ENCODE measurements at regions of chr17 and their contacts with region 1.

Region 1: GRCh38 chr17:75131280-75132017 is at the start of gene NT5C:
- DNase-seq: peak; percentile 83
- ATAC-seq: peak; percentile 83
- H3K4me3 Mint-ChIP-seq: peak within 1 kb of the TSS; percentile 88
- H3K27ac Mint-ChIP-seq: peak within 1 kb of the TSS; percentile 92
- H3K4me1 Mint-ChIP-seq: peaks cover 28% of the 10 kb centered on the region
- H3K27me3 Mint-ChIP-seq: no peaks in the 10 kb centered on the region
- CTCF ChIP-seq: no peak
- total RNA-seq, gene NT5C: 95.0 and 98.2 TPM in 2 replicates

Region 2: GRCh38 chr17:75012346-75013091 is 118.9 kb before region 1 on chr17 and contains the start of gene MRPL58:
- CTCF ChIA-PET with region 1: interaction called, 3 read pairs
- POLR2A ChIA-PET with region 1: interaction called, 12 read pairs
- intact Hi-C with region 1: loop called (anchors 1 kb)
- DNase-seq: peak; percentile 78
- ATAC-seq: peak; percentile 95
- H3K4me3 Mint-ChIP-seq: peak within 1 kb of the TSS; percentile 97
- H3K27ac Mint-ChIP-seq: peak within 1 kb of the TSS; percentile 89
- H3K4me1 Mint-ChIP-seq: peaks cover 29% of the 10 kb centered on the region
- H3K27me3 Mint-ChIP-seq: no peaks in the 10 kb centered on the region
- CTCF ChIP-seq: no peak
- total RNA-seq, gene MRPL58: 28.4 and 31.8 TPM in 2 replicates

Region 3: GRCh38 chr17:75046582-75047289 is 84.7 kb before region 1 on chr17 and contains the starts of genes ATP5PD and KCTD2:
- CTCF ChIA-PET with region 1: interaction called, 3 read pairs
- POLR2A ChIA-PET with region 1: no interaction called
- intact Hi-C with region 1: loop called (anchors 1 kb)
- DNase-seq: peak; percentile 91
- ATAC-seq: peak; percentile 95
- H3K4me3 Mint-ChIP-seq: peak within 1 kb of the TSS; percentile 97
- H3K27ac Mint-ChIP-seq: peak within 1 kb of the TSS; percentile 86
- H3K4me1 Mint-ChIP-seq: peaks cover 37% of the 10 kb centered on the region
- H3K27me3 Mint-ChIP-seq: no peaks in the 10 kb centered on the region
- CTCF ChIP-seq: no peak
- total RNA-seq, gene ATP5PD: 158 and 181 TPM in 2 replicates
- total RNA-seq, gene KCTD2: 19.5 and 20.2 TPM in 2 replicates

Region 4: GRCh38 chr17:75154195-75155106 is 23.0 kb after region 1 on chr17 and contains the start of gene JPT1:
- CTCF ChIA-PET with region 1: no interaction called
- POLR2A ChIA-PET with region 1: interaction called, 20 read pairs
- intact Hi-C with region 1: loop called (anchors 1 kb)
- DNase-seq: peak; percentile 85
- ATAC-seq: peak; percentile 97
- H3K4me3 Mint-ChIP-seq: peak within 1 kb of the TSS; percentile 91
- H3K27ac Mint-ChIP-seq: peak within 1 kb of the TSS; percentile 77
- H3K4me1 Mint-ChIP-seq: peaks cover 34% of the 10 kb centered on the region
- H3K27me3 Mint-ChIP-seq: no peaks in the 10 kb centered on the region
- CTCF ChIP-seq: no peak
- total RNA-seq, gene JPT1: 70.5 and 72.9 TPM in 2 replicates

Region 5: DNA sequence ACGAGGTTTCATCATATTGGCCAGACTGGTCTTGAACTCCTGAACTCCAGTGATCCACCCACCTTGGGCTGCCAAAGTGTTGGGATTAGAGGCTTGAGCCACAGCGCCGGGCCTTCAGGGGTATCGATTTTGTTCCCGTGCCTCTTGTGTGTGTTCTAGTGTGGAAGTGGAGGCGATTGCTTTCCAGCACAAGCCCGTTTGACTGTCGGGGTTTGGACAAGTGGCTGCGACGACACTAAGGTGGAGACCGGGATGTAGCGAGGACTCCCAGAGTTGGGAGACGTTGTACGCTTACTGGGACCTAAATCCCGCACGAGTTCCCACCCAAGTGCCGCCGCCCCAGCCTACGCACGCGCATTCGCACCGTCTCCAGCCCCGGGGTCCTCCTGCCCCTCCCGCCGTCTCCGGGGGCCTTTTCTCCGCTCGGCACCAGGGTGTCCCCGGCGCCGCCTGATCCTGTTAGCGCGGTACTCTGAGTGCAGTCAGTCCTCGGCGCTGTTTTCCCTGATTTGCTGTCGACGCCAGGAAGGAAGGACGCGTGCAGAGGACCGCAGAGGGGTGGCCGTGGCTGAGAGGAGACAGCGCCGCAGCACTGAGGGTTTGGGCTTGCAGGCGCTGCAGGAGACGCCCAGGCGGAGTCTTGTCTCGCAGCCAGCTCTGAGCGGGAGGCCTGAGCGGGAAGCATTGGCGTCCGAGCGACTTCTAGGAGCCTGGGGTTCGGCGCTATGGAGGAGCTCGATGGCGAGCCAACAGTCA is 73.8 kb after region 1 on chr17 and contains the start of gene NUP85:
- CTCF ChIA-PET with region 1: interaction called, 16 read pairs
- POLR2A ChIA-PET with region 1: interaction called, 6 read pairs
- intact Hi-C with region 1: loop called (anchors 5 kb)
- DNase-seq: peak; percentile 90
- ATAC-seq: peak; percentile 91
- H3K4me3 Mint-ChIP-seq: peak within 1 kb of the TSS; percentile 96
- H3K27ac Mint-ChIP-seq: peak within 1 kb of the TSS; percentile 99
- H3K4me1 Mint-ChIP-seq: peaks cover 22% of the 10 kb centered on the region
- H3K27me3 Mint-ChIP-seq: no peaks in the 10 kb centered on the region
- CTCF ChIP-seq: no peak
- total RNA-seq, gene NUP85: 103 and 107 TPM in 2 replicates